ENCODE measurements at regions of chr14 and their contacts with region 1.

Region 1: GRCh38 chr14:56333359-56334292 is 215.4 kb downstream of the PELI2 start:
- DNase-seq: no peak
- ATAC-seq: peak; percentile 67
- H3K4me3 ChIP-seq: no peak overlapping the region
- H3K27ac ChIP-seq: no peak overlapping the region
- H3K4me1 ChIP-seq: peaks cover 3 to 12% of the 10 kb centered on the region in 2 experiments; a peak in 2 of 4 replicates
- H3K27me3 ChIP-seq: no peaks in the 10 kb centered on the region
- CTCF ChIP-seq: no peak
- POLR2A ChIP-seq: no peak
- RAD21 ChIP-seq: no peak

Region 2: DNA sequence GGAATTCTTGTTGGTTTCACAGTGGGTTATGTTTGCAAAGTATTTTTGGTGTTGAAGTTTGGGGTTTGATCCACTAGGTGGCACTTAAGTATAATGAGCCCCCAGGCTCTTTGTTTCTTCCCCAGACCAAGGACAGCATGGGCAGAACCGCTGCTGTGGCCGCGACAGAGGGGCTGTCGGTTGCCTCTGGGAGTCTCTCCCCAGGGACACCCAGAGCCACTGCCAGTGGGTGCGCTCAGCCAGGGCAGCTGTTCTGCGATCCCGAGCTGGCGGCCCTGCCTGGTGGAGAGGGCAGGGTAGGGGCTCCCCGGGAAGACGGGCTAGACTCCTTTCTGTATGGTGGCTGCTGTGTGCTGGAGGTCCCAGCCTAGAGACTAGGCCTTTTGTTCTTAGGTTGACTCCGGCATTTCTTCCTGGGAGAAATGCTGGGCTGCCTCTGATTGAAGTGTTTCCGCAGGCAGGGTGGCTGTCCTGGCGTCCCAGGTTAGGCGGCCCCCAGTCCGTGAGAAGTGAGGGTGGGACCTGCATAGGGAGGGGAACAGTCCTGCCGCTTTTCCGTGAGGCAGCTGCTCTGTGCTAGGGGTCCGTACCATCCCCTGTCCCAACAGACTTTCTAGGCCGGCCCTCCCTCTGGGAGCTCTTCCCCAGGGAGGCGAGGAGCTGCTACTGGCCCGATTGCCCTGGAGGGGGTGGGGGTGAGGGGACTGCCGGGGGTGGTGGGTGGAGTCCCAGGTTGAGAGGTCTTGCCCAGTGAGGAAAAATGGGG is 468.6 kb before region 1 on chr14:
- CTCF ChIA-PET with region 1: no interaction called
- POLR2A ChIA-PET with region 1: no interaction called
- RAD21 ChIA-PET with region 1: no interaction called
- intact Hi-C with region 1: loop called (anchors 5 kb)
- DNase-seq: no peak
- ATAC-seq: peak; percentile 76
- H3K4me3 ChIP-seq: no peak overlapping the region
- H3K27ac ChIP-seq: no peak overlapping the region
- H3K4me1 ChIP-seq: no peaks in the 10 kb centered on the region
- H3K27me3 ChIP-seq: no peaks in the 10 kb centered on the region
- CTCF ChIP-seq: peak; percentile 39 to 56 (median 56); a peak in 4 of 6 replicates
- POLR2A ChIP-seq: no peak
- RAD21 ChIP-seq: peak; percentile 72

Region 3: DNA sequence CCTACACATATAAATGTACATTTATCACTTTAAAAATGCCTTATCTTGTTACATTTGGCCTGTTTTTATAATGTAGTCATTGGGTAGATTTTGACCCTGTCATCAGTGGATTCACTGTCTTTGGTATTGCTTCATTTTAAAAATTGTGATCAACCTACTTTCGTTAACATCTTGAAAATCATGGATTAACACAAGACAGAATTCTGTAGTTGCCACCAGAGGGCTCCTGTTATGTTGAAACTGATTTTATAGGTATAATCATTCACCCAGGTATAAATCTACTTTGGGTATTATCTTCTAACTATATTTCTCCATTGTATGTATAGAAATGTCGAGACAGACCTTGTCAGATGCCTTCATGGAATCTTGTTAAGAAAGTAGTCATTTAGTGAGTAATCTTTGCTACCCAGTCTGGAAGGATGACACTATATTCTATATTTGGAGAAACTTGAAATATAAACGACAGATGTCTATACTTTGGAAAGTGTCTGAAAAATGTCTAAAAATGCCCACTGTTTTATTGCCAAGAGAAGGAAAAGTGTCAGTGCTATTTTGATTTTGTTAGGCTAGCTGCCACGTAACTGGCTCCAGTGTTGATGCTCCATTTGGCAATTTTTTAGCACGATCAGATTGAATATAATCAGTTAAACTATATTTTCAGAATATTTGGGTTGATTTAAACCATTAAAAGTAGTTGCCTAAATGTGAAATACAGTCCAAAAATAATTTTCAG is 86.0 kb before region 1 on chr14:
- CTCF ChIA-PET with region 1: no interaction called
- POLR2A ChIA-PET with region 1: no interaction called
- RAD21 ChIA-PET with region 1: no interaction called
- intact Hi-C with region 1: no loop called
- DNase-seq: peak; percentile 4
- ATAC-seq: no peak
- H3K4me3 ChIP-seq: no peak overlapping the region
- H3K27ac ChIP-seq: no peak overlapping the region
- H3K4me1 ChIP-seq: no peaks in the 10 kb centered on the region
- H3K27me3 ChIP-seq: peaks cover 22% of the 10 kb centered on the region; the same call in 1 of the 2 replicates
- CTCF ChIP-seq: peak; percentile 29 to 53 (median 30); a peak in 4 of 6 replicates
- POLR2A ChIP-seq: no peak
- RAD21 ChIP-seq: peak; percentile 45; the same call in 1 of the 2 replicates